ENCODE measurements at regions of chr4 and their contacts with region 1.

Region 1: DNA sequence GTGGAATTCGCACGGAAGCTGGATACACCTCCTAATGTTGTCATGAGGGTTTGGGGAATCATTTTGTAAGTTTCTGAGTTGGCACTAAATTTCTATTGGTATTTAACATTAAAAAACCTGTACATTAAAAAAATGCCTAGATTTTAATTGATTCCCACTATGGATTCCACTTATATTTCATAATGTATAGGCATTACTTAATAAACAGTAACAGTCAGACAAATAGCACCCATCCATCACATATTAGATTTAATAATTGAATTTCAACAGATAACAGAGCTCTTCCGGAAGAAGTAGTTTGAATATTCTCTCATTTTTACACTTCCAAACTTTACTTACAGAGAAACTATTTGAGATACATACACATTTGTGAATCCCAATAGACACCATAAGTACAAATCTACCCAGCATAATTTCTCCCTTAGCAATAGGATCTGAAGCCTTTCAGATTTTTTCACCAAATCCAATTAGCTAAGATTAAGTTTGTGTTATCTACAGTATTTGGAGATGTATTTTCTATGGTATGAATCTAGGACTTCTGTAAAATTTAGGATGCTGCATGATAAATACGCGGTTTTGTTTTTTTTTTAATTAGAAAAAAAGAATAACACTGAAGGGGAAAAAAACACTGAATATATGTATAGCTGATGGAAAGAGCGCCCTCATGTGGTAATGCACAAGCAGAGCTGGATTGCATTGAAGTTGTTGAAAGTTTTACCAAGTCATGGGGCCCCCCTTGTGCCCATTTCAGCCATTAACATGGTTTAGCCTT is 12.2 kb upstream of the ODAM start:
- DNase-seq: peak; percentile 57 to 71
- H3K4me3 ChIP-seq: no peak overlapping the region
- H3K4me3 Mint-ChIP-seq: peak overlapping the region; percentile 68
- H3K27ac Mint-ChIP-seq: peak overlapping the region; percentile 90
- H3K4me1 ChIP-seq: peaks cover 39% of the 10 kb centered on the region
- H3K4me1 Mint-ChIP-seq: peaks cover 37% of the 10 kb centered on the region
- H3K27me3 ChIP-seq: no peaks in the 10 kb centered on the region
- H3K27me3 Mint-ChIP-seq: no peaks in the 10 kb centered on the region
- CTCF ChIP-seq: peak; percentile 58 to 82

Region 2: GRCh38 chr4:69759189-69759604 is 424.2 kb before region 1 on chr4:
- CTCF ChIA-PET with region 1: no interaction called
- POLR2A ChIA-PET with region 1: no interaction called
- intact Hi-C with region 1: loop called (anchors 2 kb)
- DNase-seq: peak; percentile 53 to 70
- H3K4me3 ChIP-seq: 0 out of 2 replicates have a peak overlapping the region, but pooled peaks have one; percentile 5
- H3K4me3 Mint-ChIP-seq: peak overlapping the region; percentile 75
- H3K27ac Mint-ChIP-seq: peak overlapping the region; percentile 73
- H3K4me1 ChIP-seq: peaks cover 40% of the 10 kb centered on the region
- H3K4me1 Mint-ChIP-seq: peaks cover 23% of the 10 kb centered on the region
- H3K27me3 ChIP-seq: no peaks in the 10 kb centered on the region
- H3K27me3 Mint-ChIP-seq: no peaks in the 10 kb centered on the region
- CTCF ChIP-seq: no peak

Region 3: DNA sequence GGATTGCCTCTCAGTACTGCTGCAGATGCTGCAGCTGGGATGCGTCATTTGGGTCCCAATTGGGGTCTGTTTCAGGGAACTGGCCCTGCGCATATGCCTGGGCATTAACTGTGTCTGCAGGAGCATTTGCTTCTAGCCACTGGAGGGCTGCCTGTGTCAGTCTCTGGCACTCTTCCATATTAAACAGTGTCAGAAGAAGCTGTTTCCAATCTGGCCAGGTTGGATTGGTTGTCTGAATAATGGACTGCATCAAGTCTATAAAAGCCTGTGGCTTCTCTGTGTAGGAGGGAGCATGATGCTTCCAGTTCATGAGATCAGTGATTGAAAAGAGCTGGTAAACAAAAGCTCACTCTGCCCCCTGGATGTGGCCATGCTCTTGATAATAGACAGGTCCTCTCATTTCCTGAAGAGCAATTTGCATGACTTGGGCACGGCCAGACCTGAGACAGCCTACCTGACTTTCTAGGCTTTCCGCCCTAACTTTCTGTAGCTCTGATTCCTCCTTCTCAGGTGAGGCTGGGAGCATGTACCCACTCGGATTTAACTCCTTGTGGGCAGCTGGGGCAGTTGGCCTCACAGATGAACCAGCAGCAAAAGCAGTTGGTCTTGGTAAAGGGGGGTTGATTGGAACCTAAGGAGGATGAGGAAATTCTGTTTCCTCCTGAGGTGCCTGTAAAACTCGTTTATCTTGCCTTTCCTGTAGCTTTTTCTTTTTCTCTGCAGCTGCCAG is 352.6 kb before region 1 on chr4:
- CTCF ChIA-PET with region 1: interaction called, 9 read pairs
- POLR2A ChIA-PET with region 1: no interaction called
- intact Hi-C with region 1: loop called (anchors 1 kb)
- DNase-seq: peak; percentile 67 to 80
- H3K4me3 ChIP-seq: peak overlapping the region; percentile 41
- H3K4me3 Mint-ChIP-seq: peak overlapping the region; percentile 78
- H3K27ac Mint-ChIP-seq: peak overlapping the region; percentile 80
- H3K4me1 ChIP-seq: peaks cover 47% of the 10 kb centered on the region
- H3K4me1 Mint-ChIP-seq: peaks cover 13% of the 10 kb centered on the region
- H3K27me3 ChIP-seq: no peaks in the 10 kb centered on the region
- H3K27me3 Mint-ChIP-seq: no peaks in the 10 kb centered on the region
- CTCF ChIP-seq: peak; percentile 34 to 40

Region 4: DNA sequence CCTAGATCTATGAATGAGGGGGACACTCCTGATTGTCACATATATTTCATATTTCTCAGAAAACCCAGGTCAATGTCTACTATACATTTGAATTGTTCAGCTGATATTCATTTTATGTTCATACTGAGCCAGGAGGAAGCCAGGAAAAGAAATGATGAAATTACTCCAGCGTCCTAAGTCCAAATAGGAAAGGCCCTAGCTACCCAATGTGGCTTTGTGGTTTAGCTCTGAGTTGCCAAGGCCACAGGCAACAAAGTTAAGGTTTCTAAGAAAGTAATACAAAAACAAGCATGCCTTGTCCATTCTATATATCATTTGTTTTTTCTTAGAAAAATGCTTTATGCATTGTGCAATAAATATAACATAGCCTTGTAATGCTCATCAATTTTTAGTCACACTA is 213.3 kb before region 1 on chr4:
- CTCF ChIA-PET with region 1: no interaction called
- POLR2A ChIA-PET with region 1: no interaction called
- intact Hi-C with region 1: no loop called
- DNase-seq: no peak
- H3K4me3 ChIP-seq: no peak overlapping the region
- H3K4me3 Mint-ChIP-seq: no peak overlapping the region
- H3K27ac Mint-ChIP-seq: no peak overlapping the region
- H3K4me1 ChIP-seq: no peaks in the 10 kb centered on the region
- H3K4me1 Mint-ChIP-seq: no peaks in the 10 kb centered on the region
- H3K27me3 ChIP-seq: no peaks in the 10 kb centered on the region
- H3K27me3 Mint-ChIP-seq: no peaks in the 10 kb centered on the region
- CTCF ChIP-seq: no peak

Region 5: GRCh38 chr4:69984030-69984443 is 199.3 kb before region 1 on chr4:
- CTCF ChIA-PET with region 1: interaction called, 12 read pairs
- POLR2A ChIA-PET with region 1: interaction called, 5 read pairs
- intact Hi-C with region 1: loop called (anchors 1 kb)
- DNase-seq: peak; percentile 33 to 59
- H3K4me3 ChIP-seq: no peak overlapping the region
- H3K4me3 Mint-ChIP-seq: peak overlapping the region; percentile 28
- H3K27ac Mint-ChIP-seq: peak overlapping the region; percentile 54
- H3K4me1 ChIP-seq: peaks cover 25% of the 10 kb centered on the region
- H3K4me1 Mint-ChIP-seq: peaks cover 20% of the 10 kb centered on the region
- H3K27me3 ChIP-seq: no peaks in the 10 kb centered on the region
- H3K27me3 Mint-ChIP-seq: no peaks in the 10 kb centered on the region
- CTCF ChIP-seq: no peak

Region 6: GRCh38 chr4:70059149-70059548 is 124.2 kb before region 1 on chr4:
- CTCF ChIA-PET with region 1: no interaction called
- POLR2A ChIA-PET with region 1: no interaction called
- intact Hi-C with region 1: loop called (anchors 1 kb)
- DNase-seq: peak; percentile 42 to 58
- H3K4me3 ChIP-seq: no peak overlapping the region
- H3K4me3 Mint-ChIP-seq: no peak overlapping the region
- H3K27ac Mint-ChIP-seq: peak overlapping the region; percentile 71
- H3K4me1 ChIP-seq: peaks cover 7% of the 10 kb centered on the region; the same call in 1 of the 2 replicates
- H3K4me1 Mint-ChIP-seq: peaks cover 18% of the 10 kb centered on the region
- H3K27me3 ChIP-seq: no peaks in the 10 kb centered on the region
- H3K27me3 Mint-ChIP-seq: no peaks in the 10 kb centered on the region
- CTCF ChIP-seq: no peak

Region 7: DNA sequence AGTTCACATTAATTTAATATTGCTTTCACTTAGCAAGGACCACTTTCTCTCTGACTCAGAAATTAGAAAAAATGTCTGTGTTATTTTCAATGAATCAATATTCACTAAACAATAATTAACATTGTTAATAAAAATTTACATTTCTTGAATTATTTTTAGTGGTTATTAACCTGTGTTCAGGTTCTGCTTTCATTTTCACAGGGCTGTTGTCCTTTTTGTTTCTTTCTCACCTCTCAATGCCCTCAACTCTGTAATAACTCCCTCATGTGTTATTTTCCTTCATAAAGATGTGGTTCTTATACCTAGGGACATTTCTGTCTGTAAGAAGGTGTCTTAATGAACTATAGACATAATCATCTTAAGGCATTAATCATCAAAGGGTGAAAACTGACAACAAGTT is 72.4 kb before region 1 on chr4:
- CTCF ChIA-PET with region 1: no interaction called
- POLR2A ChIA-PET with region 1: no interaction called
- intact Hi-C with region 1: no loop called
- DNase-seq: no peak
- H3K4me3 ChIP-seq: no peak overlapping the region
- H3K4me3 Mint-ChIP-seq: no peak overlapping the region
- H3K27ac Mint-ChIP-seq: no peak overlapping the region
- H3K4me1 ChIP-seq: no peaks in the 10 kb centered on the region
- H3K4me1 Mint-ChIP-seq: no peaks in the 10 kb centered on the region
- H3K27me3 ChIP-seq: no peaks in the 10 kb centered on the region
- H3K27me3 Mint-ChIP-seq: no peaks in the 10 kb centered on the region
- CTCF ChIP-seq: no peak

Region 8: DNA sequence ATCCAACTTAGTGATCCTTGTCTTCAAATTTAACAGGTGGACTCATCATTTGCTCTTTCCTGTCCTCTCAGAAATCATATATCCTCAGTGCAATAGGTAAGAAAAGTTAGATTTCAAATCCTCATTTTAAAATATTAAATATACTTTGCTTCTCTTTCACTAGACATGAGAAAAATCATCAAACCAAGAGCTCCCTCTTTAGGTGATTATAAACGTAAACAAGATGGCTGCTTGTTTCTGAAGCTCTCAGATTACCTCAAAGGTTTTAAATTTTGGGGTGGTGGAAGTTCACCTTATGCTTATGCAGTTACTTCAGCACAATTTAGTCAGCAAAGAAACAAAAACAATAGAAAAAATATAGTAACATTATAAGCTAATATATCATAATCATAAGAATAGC is 86.3 kb after region 1 on chr4:
- CTCF ChIA-PET with region 1: no interaction called
- POLR2A ChIA-PET with region 1: no interaction called
- intact Hi-C with region 1: loop called (anchors 2 kb)
- DNase-seq: peak in 1 of 2 experiments; percentile 1
- H3K4me3 ChIP-seq: no peak overlapping the region
- H3K4me3 Mint-ChIP-seq: no peak overlapping the region
- H3K27ac Mint-ChIP-seq: no peak overlapping the region
- H3K4me1 ChIP-seq: no peaks in the 10 kb centered on the region
- H3K4me1 Mint-ChIP-seq: no peaks in the 10 kb centered on the region
- H3K27me3 ChIP-seq: no peaks in the 10 kb centered on the region
- H3K27me3 Mint-ChIP-seq: no peaks in the 10 kb centered on the region
- CTCF ChIP-seq: peak in 1 of 2 experiments; percentile 15

Region 9: DNA sequence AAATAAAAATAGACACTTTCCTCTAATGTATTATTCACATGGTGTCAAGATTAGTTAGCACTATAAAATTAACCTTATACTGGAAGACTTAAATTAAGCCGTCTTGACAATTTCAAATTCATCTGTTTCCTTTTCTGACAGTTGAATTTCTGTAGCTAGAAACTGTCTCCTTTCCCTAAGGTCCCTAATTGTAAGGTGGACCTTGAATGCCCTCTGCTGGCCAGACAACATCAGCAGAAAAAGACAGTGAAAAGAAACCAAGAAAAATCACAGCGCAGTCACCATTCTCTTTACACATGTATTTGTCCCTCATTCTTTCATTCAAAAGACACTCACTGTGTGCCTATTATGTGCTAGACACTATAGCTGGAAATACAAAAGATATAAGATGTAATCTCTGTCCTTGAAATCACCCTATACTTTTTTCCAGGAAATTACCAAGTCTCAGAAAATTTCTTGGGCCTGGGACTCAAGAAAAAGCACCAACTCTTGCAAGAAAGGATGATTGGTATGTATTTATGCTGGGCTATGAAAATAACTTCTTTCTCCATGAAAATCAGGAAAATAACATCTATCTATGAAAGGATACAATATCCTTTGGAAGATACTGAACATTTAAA is 376.0 kb after region 1 on chr4:
- CTCF ChIA-PET with region 1: no interaction called
- POLR2A ChIA-PET with region 1: no interaction called
- intact Hi-C with region 1: loop called (anchors 2 kb)
- DNase-seq: peak; percentile 53 to 61
- H3K4me3 ChIP-seq: no peak overlapping the region
- H3K4me3 Mint-ChIP-seq: no peak overlapping the region
- H3K27ac Mint-ChIP-seq: no peak overlapping the region
- H3K4me1 ChIP-seq: peaks cover 14% of the 10 kb centered on the region
- H3K4me1 Mint-ChIP-seq: peaks cover 27% of the 10 kb centered on the region
- H3K27me3 ChIP-seq: no peaks in the 10 kb centered on the region
- H3K27me3 Mint-ChIP-seq: no peaks in the 10 kb centered on the region
- CTCF ChIP-seq: peak; percentile 78 to 83

Region 10: DNA sequence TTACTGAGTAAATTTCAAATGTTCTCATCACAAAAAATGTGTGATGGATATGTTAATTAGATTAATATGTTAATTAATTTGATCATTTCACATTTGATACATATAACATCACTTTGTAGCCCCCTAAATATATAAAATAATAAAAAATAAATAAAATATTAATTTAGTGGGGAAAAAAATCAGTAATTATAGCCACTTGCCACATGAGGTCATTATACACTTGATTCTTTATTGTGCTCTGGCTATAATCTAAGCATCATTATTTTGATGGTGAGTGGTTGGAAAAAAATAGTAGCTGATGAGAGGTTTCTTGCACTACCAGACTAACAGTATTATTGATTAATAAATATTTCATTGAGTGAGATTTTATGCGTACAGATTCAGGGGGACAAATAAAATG is 867.5 kb after region 1 on chr4:
- CTCF ChIA-PET with region 1: no interaction called
- POLR2A ChIA-PET with region 1: no interaction called
- intact Hi-C with region 1: no loop called
- DNase-seq: no peak
- H3K4me3 ChIP-seq: no peak overlapping the region
- H3K4me3 Mint-ChIP-seq: no peak overlapping the region
- H3K27ac Mint-ChIP-seq: no peak overlapping the region
- H3K4me1 ChIP-seq: no peaks in the 10 kb centered on the region
- H3K4me1 Mint-ChIP-seq: no peaks in the 10 kb centered on the region
- H3K27me3 ChIP-seq: no peaks in the 10 kb centered on the region
- H3K27me3 Mint-ChIP-seq: no peaks in the 10 kb centered on the region
- CTCF ChIP-seq: no peak

Measured in Caco-2 (cell line).